Naive thymus-derived CD4-positive, alpha-beta T cell (primary cell): ENCODE measurements at regions of chr15 and their contacts with region 1.

Region 1: DNA sequence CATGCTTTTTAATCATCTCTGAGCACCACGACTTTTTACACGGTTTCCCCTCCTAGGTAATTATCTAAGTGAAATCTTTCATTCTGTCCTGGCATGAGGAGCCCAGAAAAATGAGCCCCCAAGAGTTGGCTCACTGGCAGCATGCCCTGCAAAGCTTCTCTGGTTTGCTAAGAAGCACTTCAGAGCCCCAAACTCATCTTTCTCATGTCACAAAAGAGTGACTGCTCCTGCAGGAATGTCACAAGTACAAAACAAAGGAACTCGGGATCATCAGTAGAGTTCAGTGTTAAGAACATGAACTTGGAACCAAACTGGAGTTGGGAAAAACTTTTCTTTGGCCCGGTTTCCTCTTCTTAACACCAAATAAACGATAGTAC is 123.9 kb downstream of the FOXB1 start:
- DNase-seq: no peak
- ATAC-seq: no peak
- H3K4me3 ChIP-seq: peak overlapping the region; percentile 75
- H3K4me3 Mint-ChIP-seq: peak overlapping the region; percentile 81 to 94 (median 90)
- H3K27ac ChIP-seq: peak overlapping the region; percentile 72
- H3K27ac Mint-ChIP-seq: peak overlapping the region; percentile 83 to 100 (median 96)
- H3K4me1 ChIP-seq: peaks cover 12 to 21% of the 10 kb centered on the region in 2 donors
- H3K4me1 Mint-ChIP-seq: peaks cover 10 to 57% (median 44%) of the 10 kb centered on the region in 7 donors
- H3K27me3 ChIP-seq: no peaks in the 10 kb centered on the region
- H3K27me3 Mint-ChIP-seq: peaks cover 0 to 12% (median 0%) of the 10 kb centered on the region in 5 donors

Region 2: DNA sequence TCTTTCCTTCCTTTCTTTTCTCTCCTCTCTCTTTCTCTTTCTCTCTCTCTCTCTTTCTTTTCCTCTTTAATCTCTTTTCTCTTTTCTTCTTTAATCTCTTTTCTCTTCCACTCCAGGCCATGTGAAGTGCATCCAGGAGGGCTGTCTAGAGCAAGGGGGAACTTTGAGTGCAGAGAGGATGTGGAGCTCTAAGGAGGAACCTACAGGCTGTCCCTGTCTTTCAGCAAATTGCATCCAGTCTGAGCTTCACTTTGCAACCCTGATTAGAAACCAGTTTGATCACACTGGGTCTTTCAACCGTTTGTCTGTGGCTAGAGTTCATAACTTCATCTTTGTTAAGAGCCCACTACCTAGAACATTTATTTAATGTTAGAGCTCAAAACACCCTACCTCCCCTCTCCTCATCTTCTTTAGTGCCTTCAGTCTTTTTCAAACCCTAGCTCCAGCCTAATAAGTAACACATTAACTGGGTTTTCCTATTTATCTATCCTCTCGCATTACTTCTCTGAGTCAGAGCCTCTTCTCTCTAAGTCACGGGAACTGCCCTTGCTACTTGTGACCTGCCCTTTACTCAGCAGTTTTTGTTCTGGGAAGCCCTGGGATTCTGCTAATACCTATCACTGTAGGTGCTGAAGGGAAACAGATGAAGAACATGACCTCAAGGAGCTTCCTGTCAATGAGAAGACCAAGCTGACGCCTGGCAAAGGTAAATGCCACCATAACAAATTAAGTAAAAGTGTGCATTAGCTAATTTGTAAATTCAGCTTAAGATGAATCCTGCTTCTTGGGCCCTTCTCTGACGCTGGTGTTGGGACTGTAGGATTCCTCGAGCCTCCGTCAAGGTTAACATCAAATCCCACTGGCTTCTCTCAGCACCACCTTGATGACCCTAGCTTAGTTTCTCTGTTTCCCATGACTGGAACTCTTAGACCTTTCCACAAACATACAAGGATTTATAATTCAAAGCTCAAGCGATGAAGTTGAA is 516.4 kb before region 1 on chr15 and contains the start of gene GCNT3:
- CTCF ChIA-PET with region 1: no interaction called
- POLR2A ChIA-PET with region 1: no interaction called
- intact Hi-C with region 1: no loop called
- DNase-seq: no peak
- ATAC-seq: no peak
- H3K4me3 ChIP-seq: no peak within 1 kb of the TSS
- H3K4me3 Mint-ChIP-seq: peak within 1 kb of the TSS in 1 of 10 donors; percentile 6
- H3K27ac ChIP-seq: no peak within 1 kb of the TSS
- H3K27ac Mint-ChIP-seq: peak within 1 kb of the TSS in 5 of 9 donors; percentile 45 to 86 (median 81)
- H3K4me1 ChIP-seq: no peaks in the 10 kb centered on the region
- H3K4me1 Mint-ChIP-seq: peaks cover 7 to 17% (median 11%) of the 10 kb centered on the region in 7 donors
- H3K27me3 ChIP-seq: no peaks in the 10 kb centered on the region
- H3K27me3 Mint-ChIP-seq: peaks cover 13 to 39% (median 31%) of the 10 kb centered on the region in 5 donors
- total RNA-seq, gene GCNT3: not detected

Region 3: DNA sequence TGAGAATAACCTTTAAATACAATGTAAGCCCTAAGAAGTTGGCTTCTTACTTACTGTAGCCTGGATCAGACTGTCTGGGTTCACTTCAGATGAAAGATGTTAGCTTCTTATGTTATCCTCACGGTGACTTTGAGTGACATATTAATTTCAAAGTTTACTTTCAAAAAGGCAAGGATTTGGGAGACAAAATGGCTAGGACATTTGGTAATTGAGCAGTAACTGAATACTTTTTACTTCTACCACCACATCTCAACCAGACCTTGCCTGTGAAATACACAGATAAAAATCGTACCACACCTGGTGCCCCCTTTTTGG is 402.9 kb before region 1 on chr15:
- CTCF ChIA-PET with region 1: interaction called, 7 read pairs
- POLR2A ChIA-PET with region 1: no interaction called
- intact Hi-C with region 1: loop called in 1 of 2 experiments (anchors 1 kb)
- DNase-seq: no peak
- ATAC-seq: no peak
- H3K4me3 ChIP-seq: no peak overlapping the region
- H3K4me3 Mint-ChIP-seq: no peak overlapping the region
- H3K27ac ChIP-seq: no peak overlapping the region
- H3K27ac Mint-ChIP-seq: no peak overlapping the region
- H3K4me1 ChIP-seq: no peaks in the 10 kb centered on the region
- H3K4me1 Mint-ChIP-seq: peaks cover 0 to 3% (median 0%) of the 10 kb centered on the region in 7 donors
- H3K27me3 ChIP-seq: no peaks in the 10 kb centered on the region
- H3K27me3 Mint-ChIP-seq: peaks cover 0 to 30% (median 0%) of the 10 kb centered on the region in 5 donors

Region 4: GRCh38 chr15:59797756-59798604 is 330.0 kb before region 1 on chr15:
- CTCF ChIA-PET with region 1: interaction called, 4 read pairs
- POLR2A ChIA-PET with region 1: interaction called, 3 read pairs
- intact Hi-C with region 1: loop called in 1 of 2 experiments (anchors 1 kb)
- DNase-seq: no peak
- ATAC-seq: no peak
- H3K4me3 ChIP-seq: peak overlapping the region; percentile 4
- H3K4me3 Mint-ChIP-seq: peak overlapping the region; percentile 44 to 75 (median 62)
- H3K27ac ChIP-seq: peak overlapping the region; percentile 70
- H3K27ac Mint-ChIP-seq: peak overlapping the region; percentile 38 to 96 (median 92)
- H3K4me1 ChIP-seq: peaks cover 22 to 72% of the 10 kb centered on the region in 2 donors
- H3K4me1 Mint-ChIP-seq: peaks cover 28 to 97% (median 88%) of the 10 kb centered on the region in 7 donors
- H3K27me3 ChIP-seq: no peaks in the 10 kb centered on the region
- H3K27me3 Mint-ChIP-seq: peaks cover 0 to 27% (median 0%) of the 10 kb centered on the region in 5 donors

Region 5: GRCh38 chr15:59976480-59977271 is 151.3 kb before region 1 on chr15:
- CTCF ChIA-PET with region 1: no interaction called
- POLR2A ChIA-PET with region 1: interaction called, 3 read pairs
- intact Hi-C with region 1: loop called in 1 of 2 experiments (anchors 1 kb)
- DNase-seq: peak in 8 of 9 donors; percentile 38 to 90 (median 86)
- ATAC-seq: peak; percentile 98
- H3K4me3 ChIP-seq: no peak overlapping the region
- H3K4me3 Mint-ChIP-seq: peak overlapping the region; percentile 12 to 83 (median 70)
- H3K27ac ChIP-seq: no peak overlapping the region
- H3K27ac Mint-ChIP-seq: peak overlapping the region in 8 of 9 donors; percentile 60 to 80 (median 74)
- H3K4me1 ChIP-seq: peaks cover 21 to 23% of the 10 kb centered on the region in 2 donors
- H3K4me1 Mint-ChIP-seq: peaks cover 13 to 43% (median 38%) of the 10 kb centered on the region in 7 donors
- H3K27me3 ChIP-seq: no peaks in the 10 kb centered on the region
- H3K27me3 Mint-ChIP-seq: peaks cover 0 to 27% (median 0%) of the 10 kb centered on the region in 5 donors

Region 6: DNA sequence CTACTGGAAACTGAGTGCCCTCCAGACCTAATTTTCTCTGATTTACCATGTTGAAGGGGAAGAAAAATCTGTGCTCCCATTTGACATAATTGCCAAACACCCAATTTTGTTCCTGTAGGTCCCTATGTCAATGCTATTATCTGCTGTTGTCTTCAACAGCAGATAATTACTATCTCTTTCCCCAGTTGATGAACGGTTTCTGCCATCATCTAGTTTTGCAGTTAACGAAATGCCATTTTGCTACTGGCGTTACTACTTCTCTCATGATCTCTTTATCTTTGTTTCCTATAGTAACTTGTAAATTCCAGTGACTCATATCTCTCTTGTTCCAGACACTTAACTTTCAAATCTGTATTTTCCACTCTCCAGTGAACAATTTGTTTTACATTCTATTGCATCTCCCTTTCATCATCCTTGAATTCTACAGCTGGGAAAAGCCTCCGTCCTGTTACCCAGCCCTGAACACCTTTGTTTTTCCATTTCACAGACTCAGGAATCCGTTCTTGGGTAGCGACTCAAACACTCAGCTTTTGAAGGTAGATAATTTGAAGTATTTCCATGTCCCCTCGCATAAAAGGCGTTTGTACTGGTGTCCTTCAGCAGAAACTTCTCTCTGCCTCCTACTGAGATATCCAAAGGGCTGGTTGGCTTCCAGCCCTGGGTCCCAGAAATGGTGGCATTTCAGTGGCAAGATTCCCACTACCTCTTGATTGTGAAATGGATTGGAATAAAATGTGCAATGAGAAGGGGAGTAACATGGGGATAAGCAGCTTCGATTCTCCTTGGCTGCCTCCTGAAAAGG is 12.2 kb before region 1 on chr15:
- CTCF ChIA-PET with region 1: no interaction called
- POLR2A ChIA-PET with region 1: interaction called, 3 read pairs
- intact Hi-C with region 1: loop called in 1 of 2 experiments (anchors 1 kb)
- DNase-seq: no peak
- ATAC-seq: no peak
- H3K4me3 ChIP-seq: no peak overlapping the region
- H3K4me3 Mint-ChIP-seq: no peak overlapping the region
- H3K27ac ChIP-seq: no peak overlapping the region
- H3K27ac Mint-ChIP-seq: no peak overlapping the region
- H3K4me1 ChIP-seq: no peaks in the 10 kb centered on the region
- H3K4me1 Mint-ChIP-seq: peaks cover 0 to 12% (median 8%) of the 10 kb centered on the region in 7 donors
- H3K27me3 ChIP-seq: no peaks in the 10 kb centered on the region
- H3K27me3 Mint-ChIP-seq: peaks cover 0 to 7% (median 5%) of the 10 kb centered on the region in 5 donors

Region 7: GRCh38 chr15:60162241-60162967 is 34.4 kb after region 1 on chr15:
- CTCF ChIA-PET with region 1: no interaction called
- POLR2A ChIA-PET with region 1: no interaction called
- intact Hi-C with region 1: no loop called
- DNase-seq: no peak
- ATAC-seq: no peak
- H3K4me3 ChIP-seq: no peak overlapping the region
- H3K4me3 Mint-ChIP-seq: no peak overlapping the region
- H3K27ac ChIP-seq: no peak overlapping the region
- H3K27ac Mint-ChIP-seq: no peak overlapping the region
- H3K4me1 ChIP-seq: no peaks in the 10 kb centered on the region
- H3K4me1 Mint-ChIP-seq: no peaks in the 10 kb centered on the region
- H3K27me3 ChIP-seq: no peaks in the 10 kb centered on the region
- H3K27me3 Mint-ChIP-seq: peaks cover 7 to 54% (median 22%) of the 10 kb centered on the region in 5 donors

Region 8: GRCh38 chr15:60237421-60237820 is 109.4 kb after region 1 on chr15:
- CTCF ChIA-PET with region 1: no interaction called
- POLR2A ChIA-PET with region 1: no interaction called
- intact Hi-C with region 1: no loop called
- DNase-seq: no peak
- ATAC-seq: no peak
- H3K4me3 ChIP-seq: no peak overlapping the region
- H3K4me3 Mint-ChIP-seq: peak overlapping the region in 1 of 10 donors; percentile 26
- H3K27ac ChIP-seq: no peak overlapping the region
- H3K27ac Mint-ChIP-seq: no peak overlapping the region
- H3K4me1 ChIP-seq: no peaks in the 10 kb centered on the region
- H3K4me1 Mint-ChIP-seq: peaks cover 0 to 11% (median 4%) of the 10 kb centered on the region in 7 donors
- H3K27me3 ChIP-seq: no peaks in the 10 kb centered on the region
- H3K27me3 Mint-ChIP-seq: peaks cover 15 to 44% (median 35%) of the 10 kb centered on the region in 5 donors